Common myeloid progenitor, CD34-positive (primary cell): ENCODE measurements at regions of chr12 and their contacts with region 1.

Region 1: GRCh38 chr12:27434673-27435565 is 11.6 kb upstream of the SMCO2 start:
- DNase-seq: peak in 2 of 3 donors; percentile 37 to 47
- H3K4me3 ChIP-seq: peak overlapping the region in 1 of 7 experiments; percentile 37
- H3K27ac ChIP-seq: peak overlapping the region; percentile 27 to 44
- H3K4me1 ChIP-seq: peaks cover 6 to 23% (median 16%) of the 10 kb centered on the region in 4 experiments
- H3K27me3 ChIP-seq: no peaks in the 10 kb centered on the region

Region 2: GRCh38 chr12:27424631-27425230 is 10.2 kb before region 1 on chr12:
- CTCF ChIA-PET with region 1: interaction called, 31 read pairs
- POLR2A ChIA-PET with region 1: no interaction called
- DNase-seq: peak; percentile 74 to 80 (median 79)
- H3K4me3 ChIP-seq: no peak overlapping the region
- H3K27ac ChIP-seq: peak overlapping the region in 1 of 2 experiments; percentile 7
- H3K4me1 ChIP-seq: peaks cover 0 to 6% (median 1%) of the 10 kb centered on the region in 4 experiments
- H3K27me3 ChIP-seq: no peaks in the 10 kb centered on the region

Region 3: DNA sequence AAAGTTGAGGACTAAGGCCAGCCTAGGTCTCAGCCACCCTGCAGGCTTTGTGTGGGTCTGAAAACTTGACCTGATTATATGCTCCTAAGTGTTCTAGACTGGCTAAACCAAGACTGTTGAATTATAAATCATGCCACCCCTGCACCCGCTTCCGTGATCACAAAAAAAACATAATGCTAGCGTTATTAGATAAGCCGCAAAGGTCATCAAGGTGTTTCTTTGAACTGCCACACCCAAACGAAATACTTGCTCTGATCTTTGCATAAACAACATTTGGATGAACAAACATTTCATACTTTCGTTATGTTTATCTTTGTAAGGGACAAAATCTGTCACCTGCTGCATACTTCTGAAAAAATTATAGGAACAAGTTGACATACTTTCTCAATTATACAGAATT is 14.1 kb after region 1 on chr12:
- CTCF ChIA-PET with region 1: interaction called, 45 read pairs
- POLR2A ChIA-PET with region 1: no interaction called
- DNase-seq: no peak
- H3K4me3 ChIP-seq: no peak overlapping the region
- H3K27ac ChIP-seq: no peak overlapping the region
- H3K4me1 ChIP-seq: peaks cover 0 to 6% (median 0%) of the 10 kb centered on the region in 4 experiments
- H3K27me3 ChIP-seq: no peaks in the 10 kb centered on the region

Region 4: DNA sequence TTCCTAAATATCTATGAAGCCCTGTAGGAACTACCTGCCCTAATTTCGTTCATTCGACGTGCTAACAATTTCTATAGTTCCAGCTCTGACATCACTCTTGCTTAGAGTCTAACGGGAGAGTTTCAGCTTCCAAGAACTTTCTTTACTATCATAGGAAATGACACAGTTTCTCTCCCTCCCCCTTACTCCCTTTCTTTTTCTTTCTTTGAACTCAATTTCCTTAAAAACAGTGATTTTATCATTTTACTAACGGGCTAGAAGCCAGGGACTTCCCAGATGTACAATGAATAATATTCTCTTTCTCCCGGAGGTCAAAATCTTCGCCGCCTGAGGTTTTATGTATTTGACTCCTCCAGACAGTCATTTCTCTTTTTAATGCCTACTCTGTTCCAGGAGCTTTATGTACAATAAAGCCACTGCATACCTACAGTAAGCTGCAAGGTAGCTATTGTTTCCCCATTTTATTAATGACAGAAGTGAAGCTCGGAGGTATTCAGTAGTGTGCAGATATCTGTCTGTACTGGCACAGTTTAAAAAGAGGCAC is 27.3 kb after region 1 on chr12:
- CTCF ChIA-PET with region 1: interaction called, 16 read pairs
- POLR2A ChIA-PET with region 1: interaction called, 4 read pairs
- DNase-seq: peak in 2 of 3 donors; percentile 30 to 33
- H3K4me3 ChIP-seq: peak overlapping the region in 2 of 7 experiments; percentile 52 to 55
- H3K27ac ChIP-seq: peak overlapping the region; percentile 36 to 93
- H3K4me1 ChIP-seq: peaks cover 12 to 49% (median 43%) of the 10 kb centered on the region in 4 experiments
- H3K27me3 ChIP-seq: no peaks in the 10 kb centered on the region

Region 5: DNA sequence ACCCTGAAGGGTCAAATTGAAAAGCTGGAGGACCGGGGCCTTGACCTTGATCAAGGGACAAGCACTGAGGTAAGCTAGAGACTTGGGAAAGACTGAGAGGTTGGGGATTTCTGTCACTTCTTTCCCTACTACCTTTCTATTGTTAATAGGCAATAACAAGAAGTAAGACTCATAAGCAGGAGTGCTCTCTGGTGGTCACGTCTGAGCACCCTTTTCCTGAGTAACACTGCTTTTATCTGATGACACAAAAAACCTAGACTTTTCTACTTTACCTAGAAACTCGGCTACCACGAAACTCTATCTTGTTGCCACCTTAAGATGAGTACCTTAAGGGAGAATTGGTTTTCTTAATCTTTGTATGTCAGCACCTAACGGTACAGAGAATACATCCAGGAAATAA is 53.6 kb after region 1 on chr12:
- CTCF ChIA-PET with region 1: interaction called, 20 read pairs
- POLR2A ChIA-PET with region 1: no interaction called
- DNase-seq: peak in 1 of 3 donors; percentile 36
- H3K4me3 ChIP-seq: no peak overlapping the region
- H3K27ac ChIP-seq: no peak overlapping the region
- H3K4me1 ChIP-seq: peaks cover 0 to 4% (median 0%) of the 10 kb centered on the region in 4 experiments
- H3K27me3 ChIP-seq: no peaks in the 10 kb centered on the region

Region 6: DNA sequence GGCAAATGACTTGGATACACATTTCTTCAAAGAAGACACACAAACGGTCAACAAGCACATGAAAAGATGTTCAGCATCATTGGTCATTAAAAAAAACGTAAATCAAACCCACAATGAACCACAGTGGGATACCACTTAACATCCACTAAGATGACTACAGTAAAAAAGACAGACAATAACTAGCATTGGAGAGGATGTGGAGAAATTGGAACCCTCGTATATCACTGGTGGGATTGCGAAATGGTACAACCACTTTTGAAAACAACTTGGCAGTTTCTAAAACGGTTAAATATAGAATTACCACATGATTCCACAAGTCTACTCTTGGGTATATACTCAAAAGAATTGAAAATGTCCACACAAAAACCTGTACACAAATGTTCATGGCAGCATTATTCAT is 63.8 kb after region 1 on chr12:
- CTCF ChIA-PET with region 1: no interaction called
- POLR2A ChIA-PET with region 1: no interaction called
- DNase-seq: no peak
- H3K4me3 ChIP-seq: no peak overlapping the region
- H3K27ac ChIP-seq: no peak overlapping the region
- H3K4me1 ChIP-seq: no peaks in the 10 kb centered on the region
- H3K27me3 ChIP-seq: no peaks in the 10 kb centered on the region

Region 7: DNA sequence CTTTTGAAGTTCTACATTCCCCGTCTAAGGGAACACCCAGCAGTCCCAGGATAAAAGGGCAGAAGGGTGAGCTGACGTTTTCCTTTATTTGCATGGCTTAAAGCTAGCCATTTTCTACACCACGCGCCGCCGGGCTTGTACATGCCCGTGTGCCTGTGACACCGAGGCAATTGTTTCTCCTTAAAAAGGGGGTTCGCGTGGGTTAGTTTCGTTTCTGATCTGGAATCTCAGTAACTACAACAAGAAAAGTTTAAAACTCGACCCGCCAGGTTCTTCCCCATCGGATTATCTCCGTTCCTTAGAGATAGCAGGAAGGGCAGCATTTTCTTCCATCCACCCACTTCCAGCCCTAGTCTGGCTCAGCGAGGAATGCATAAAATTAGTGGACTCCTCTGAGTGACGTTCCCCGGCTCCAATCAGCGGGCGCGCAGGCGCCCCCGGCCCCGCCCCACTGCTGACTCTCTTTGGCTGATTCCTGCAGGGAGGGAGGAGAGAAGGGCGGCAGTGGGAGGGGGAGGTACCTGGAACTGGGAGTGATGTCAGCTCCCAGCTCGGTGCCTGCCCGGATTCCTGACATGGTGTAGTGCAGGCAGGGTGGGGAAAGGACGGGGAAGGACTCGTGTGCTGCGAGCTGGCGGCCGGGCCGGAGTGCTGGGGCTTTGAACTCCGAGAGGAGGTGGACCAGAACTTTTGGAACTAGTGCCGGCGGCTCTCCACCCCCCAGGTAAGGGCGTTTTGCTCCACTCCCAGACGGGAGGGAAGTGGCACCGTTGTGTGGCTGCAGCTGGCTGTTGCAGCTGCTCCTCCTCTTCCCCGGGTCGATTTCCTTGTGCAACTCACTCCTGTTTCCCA is 88.9 kb after region 1 on chr12 and contains the start of gene PPFIBP1:
- CTCF ChIA-PET with region 1: interaction called, 32 read pairs
- POLR2A ChIA-PET with region 1: no interaction called
- DNase-seq: peak; percentile 96 to 97 (median 96)
- H3K4me3 ChIP-seq: peak within 1 kb of the TSS; percentile 79 to 99 (median 92)
- H3K27ac ChIP-seq: peak within 1 kb of the TSS; percentile 59 to 80
- H3K4me1 ChIP-seq: peaks cover 11 to 28% (median 19%) of the 10 kb centered on the region in 4 experiments
- H3K27me3 ChIP-seq: no peaks in the 10 kb centered on the region

Region 8: DNA sequence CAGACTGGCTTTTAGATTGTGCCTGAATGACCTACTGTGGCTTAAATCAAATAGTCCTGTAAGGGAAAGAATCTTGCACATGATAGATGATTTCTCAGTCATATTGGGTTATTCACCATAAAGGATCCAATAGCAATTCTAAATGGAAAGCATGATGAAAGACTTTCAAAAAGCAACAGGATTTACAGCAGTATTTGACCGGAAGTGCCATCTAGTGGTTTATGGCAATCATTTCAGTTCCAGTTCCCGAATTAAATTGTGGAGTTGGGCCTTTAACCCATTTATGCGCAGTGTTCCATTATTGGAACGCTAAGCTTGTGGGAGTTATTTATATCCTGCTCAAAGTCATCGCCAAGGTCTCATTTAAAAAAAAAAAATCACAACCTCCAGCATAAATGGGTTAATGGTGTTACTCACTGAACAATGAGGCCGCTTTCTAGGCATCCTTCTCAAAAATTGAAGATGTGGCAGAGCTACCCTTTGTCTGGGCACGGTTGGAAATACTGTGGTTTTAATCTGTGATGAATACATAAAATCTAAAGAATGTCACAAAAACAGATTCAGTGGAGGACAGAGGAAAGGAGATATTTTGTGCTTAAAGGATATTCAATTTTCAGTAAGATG is 200.5 kb after region 1 on chr12:
- CTCF ChIA-PET with region 1: interaction called, 19 read pairs
- POLR2A ChIA-PET with region 1: no interaction called
- DNase-seq: peak; percentile 51 to 70 (median 70)
- H3K4me3 ChIP-seq: no peak overlapping the region
- H3K27ac ChIP-seq: no peak overlapping the region
- H3K4me1 ChIP-seq: no peaks in the 10 kb centered on the region
- H3K27me3 ChIP-seq: no peaks in the 10 kb centered on the region